HEK293 (cell line): ENCODE measurements at regions of chr12 and their contacts with region 1.

Region 1: GRCh38 chr12:53543539-53543938 is 36.3 kb upstream of the NPFF start:
- H3K4me3 ChIP-seq: no peak overlapping the region
- H3K27ac ChIP-seq: no peak overlapping the region; the same call in 1 of the 2 replicates
- H3K4me1 ChIP-seq: peaks cover 9% of the 10 kb centered on the region
- CTCF ChIP-seq: peak; percentile 88

Region 2: DNA sequence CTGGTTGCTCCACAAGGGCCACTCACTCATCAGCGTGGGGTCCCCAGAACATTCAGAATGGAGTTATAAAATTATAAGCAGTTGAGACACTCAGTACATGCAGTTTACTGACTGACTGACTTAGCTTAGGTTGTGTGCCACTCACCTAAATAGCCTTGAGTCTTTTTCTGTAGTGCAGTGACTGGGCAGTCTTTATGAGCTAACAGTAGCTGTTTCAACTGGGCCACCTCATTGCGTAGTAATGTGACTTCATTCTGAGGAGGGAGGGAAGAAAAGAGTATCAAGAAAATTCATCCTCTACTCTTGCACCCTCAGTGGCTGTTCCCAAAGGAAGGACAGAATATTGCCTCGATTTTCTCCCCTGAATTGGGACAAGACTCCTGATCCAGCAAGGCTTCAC is 20.4 kb before region 1 on chr12:
- CTCF ChIA-PET with region 1: no interaction called
- POLR2A ChIA-PET with region 1: no interaction called
- H3K4me3 ChIP-seq: no peak overlapping the region
- H3K27ac ChIP-seq: no peak overlapping the region
- H3K4me1 ChIP-seq: no peaks in the 10 kb centered on the region
- CTCF ChIP-seq: no peak

Region 3: GRCh38 chr12:53568809-53569557 is 25.4 kb after region 1 on chr12:
- CTCF ChIA-PET with region 1: interaction called, 21 read pairs
- POLR2A ChIA-PET with region 1: no interaction called
- H3K4me3 ChIP-seq: no peak overlapping the region
- H3K27ac ChIP-seq: no peak overlapping the region; the same call in 1 of the 2 replicates
- H3K4me1 ChIP-seq: peaks cover 22% of the 10 kb centered on the region
- CTCF ChIP-seq: no peak